Activated CD4-positive, alpha-beta memory T cell treated with anti-CD3 and anti-CD28 coated beads for 36 hours (primary cell): ENCODE measurements at regions of chr1 and their contacts with region 1.

Region 1: DNA sequence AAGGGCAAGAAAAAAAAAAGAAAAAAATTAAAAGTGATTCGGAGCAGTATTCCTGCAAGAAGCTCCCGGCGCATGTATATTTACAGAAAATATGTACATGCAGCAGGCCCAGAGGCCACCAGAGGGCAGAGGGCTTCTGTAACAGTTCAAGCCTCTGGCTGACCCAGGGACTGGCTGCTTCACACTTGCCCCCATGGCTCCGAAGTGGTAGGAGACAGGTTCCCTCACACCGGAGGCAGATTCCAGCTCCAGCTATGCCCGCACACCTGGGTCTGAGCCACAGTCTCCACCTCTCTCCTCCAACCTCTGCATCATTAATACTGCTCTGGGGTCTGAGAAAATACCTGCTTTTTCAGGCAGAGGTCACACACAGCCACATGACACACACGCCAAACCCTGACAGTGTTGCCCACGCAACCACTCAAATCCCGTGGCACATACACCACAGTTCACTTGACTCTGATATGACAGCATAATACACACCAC is 2.2 kb upstream of the ARHGAP30 start:
- DNase-seq: peak; percentile 64
- H3K4me3 Mint-ChIP-seq: no peak overlapping the region
- H3K27ac Mint-ChIP-seq: peak overlapping the region; percentile 39
- H3K4me1 Mint-ChIP-seq: peaks cover 31% of the 10 kb centered on the region
- H3K27me3 Mint-ChIP-seq: no peaks in the 10 kb centered on the region

Region 2: DNA sequence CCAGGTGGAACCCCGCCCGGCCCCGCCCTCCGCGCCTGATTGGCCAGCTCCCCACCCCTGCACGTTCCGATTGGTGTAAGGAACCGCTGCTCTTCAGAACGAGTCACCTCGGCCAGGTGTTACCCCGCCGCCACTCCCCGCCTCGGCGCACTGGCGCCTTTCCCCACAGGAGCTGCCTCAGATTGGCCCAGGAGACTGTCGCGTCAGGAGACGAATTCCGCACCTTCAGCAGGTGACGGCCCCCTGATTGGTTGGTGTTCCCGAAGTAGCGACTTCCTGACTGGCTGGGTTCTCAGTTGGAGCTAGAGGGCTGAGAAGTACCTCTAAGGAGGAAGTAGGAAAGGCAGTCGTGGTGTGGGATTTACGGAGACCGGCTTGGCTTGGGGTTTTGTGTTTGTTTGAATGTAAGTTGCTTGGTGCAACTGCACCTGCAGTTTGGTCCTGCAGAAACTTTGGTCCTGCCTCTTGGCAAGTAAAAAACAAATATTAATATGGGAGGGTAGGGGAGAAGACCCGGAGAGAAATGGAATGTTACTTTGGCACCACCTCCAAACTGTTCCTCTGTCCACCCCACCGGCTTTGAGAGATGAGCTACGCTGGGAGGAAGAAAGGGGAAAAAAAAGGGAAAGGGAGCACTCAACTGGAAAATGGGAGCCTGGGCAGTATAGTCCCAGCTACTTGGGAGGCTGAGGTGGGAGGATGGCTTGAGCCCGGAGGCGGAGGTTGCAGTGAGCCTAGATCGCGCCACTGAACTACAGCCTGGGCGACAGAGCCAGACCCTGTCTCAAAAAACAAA is 50.6 kb before region 1 on chr1:
- CTCF ChIA-PET with region 1: no interaction called
- POLR2A ChIA-PET with region 1: interaction called, 4 read pairs
- intact Hi-C with region 1: loop called (anchors 2 kb)
- DNase-seq: peak; percentile 92
- H3K4me3 Mint-ChIP-seq: peak overlapping the region; percentile 86
- H3K27ac Mint-ChIP-seq: peak overlapping the region; percentile 82
- H3K4me1 Mint-ChIP-seq: peaks cover 51% of the 10 kb centered on the region
- H3K27me3 Mint-ChIP-seq: no peaks in the 10 kb centered on the region

Region 3: DNA sequence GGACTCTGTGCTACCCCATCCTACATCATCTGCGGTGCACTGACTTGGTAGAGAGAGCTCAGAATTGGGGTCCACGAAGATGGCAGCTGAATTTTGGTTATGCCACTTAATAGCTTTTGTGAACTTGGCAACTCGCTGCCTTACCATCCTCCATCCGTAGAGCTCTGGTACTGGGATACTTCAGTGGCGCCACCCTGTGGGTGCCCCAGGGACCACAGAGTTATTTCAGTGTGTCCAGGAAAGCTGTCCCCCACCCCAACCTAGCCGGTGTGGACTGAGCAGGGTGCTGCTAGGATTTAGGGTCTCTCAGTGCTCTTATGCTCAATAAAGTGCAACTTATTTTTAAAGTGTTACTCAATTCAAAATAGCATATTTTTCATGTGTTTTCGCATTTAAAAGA is 17.1 kb before region 1 on chr1:
- CTCF ChIA-PET with region 1: interaction called, 3 read pairs
- POLR2A ChIA-PET with region 1: interaction called, 10 read pairs
- intact Hi-C with region 1: no loop called
- DNase-seq: no peak
- H3K4me3 Mint-ChIP-seq: no peak overlapping the region
- H3K27ac Mint-ChIP-seq: no peak overlapping the region
- H3K4me1 Mint-ChIP-seq: peaks cover 13% of the 10 kb centered on the region
- H3K27me3 Mint-ChIP-seq: no peaks in the 10 kb centered on the region

Region 4: GRCh38 chr1:161092621-161093028 is 20.7 kb after region 1 on chr1:
- CTCF ChIA-PET with region 1: interaction called, 120 read pairs
- POLR2A ChIA-PET with region 1: interaction called, 15 read pairs
- intact Hi-C with region 1: loop called (anchors 1 kb)
- DNase-seq: peak; percentile 76
- H3K4me3 Mint-ChIP-seq: no peak overlapping the region
- H3K27ac Mint-ChIP-seq: peak overlapping the region; percentile 70
- H3K4me1 Mint-ChIP-seq: peaks cover 52% of the 10 kb centered on the region
- H3K27me3 Mint-ChIP-seq: no peaks in the 10 kb centered on the region

Region 5: GRCh38 chr1:161117759-161118581 is 46.0 kb after region 1 on chr1 and contains the starts of genes NIT1 and PFDN2:
- CTCF ChIA-PET with region 1: interaction called, 12 read pairs
- POLR2A ChIA-PET with region 1: interaction called, 18 read pairs
- intact Hi-C with region 1: loop called (anchors 1 kb)
- DNase-seq: peak; percentile 92
- H3K4me3 Mint-ChIP-seq: peak within 1 kb of the TSS; percentile 93
- H3K27ac Mint-ChIP-seq: peak within 1 kb of the TSS; percentile 84
- H3K4me1 Mint-ChIP-seq: peaks cover 66% of the 10 kb centered on the region
- H3K27me3 Mint-ChIP-seq: no peaks in the 10 kb centered on the region
- total RNA-seq, gene NIT1: 65.2 to 66.5 TPM
- total RNA-seq, gene PFDN2: 152 to 155 TPM

Region 6: GRCh38 chr1:161139765-161140164 is 67.8 kb after region 1 on chr1:
- CTCF ChIA-PET with region 1: interaction called, 22 read pairs
- POLR2A ChIA-PET with region 1: interaction called, 5 read pairs
- intact Hi-C with region 1: no loop called
- DNase-seq: peak; percentile 40
- H3K4me3 Mint-ChIP-seq: no peak overlapping the region
- H3K27ac Mint-ChIP-seq: no peak overlapping the region
- H3K4me1 Mint-ChIP-seq: peaks cover 3% of the 10 kb centered on the region
- H3K27me3 Mint-ChIP-seq: no peaks in the 10 kb centered on the region

Region 7: GRCh38 chr1:161486806-161487741 is 415.1 kb after region 1 on chr1:
- CTCF ChIA-PET with region 1: no interaction called
- POLR2A ChIA-PET with region 1: no interaction called
- intact Hi-C with region 1: no loop called
- DNase-seq: peak; percentile 26
- H3K4me3 Mint-ChIP-seq: no peak overlapping the region
- H3K27ac Mint-ChIP-seq: no peak overlapping the region
- H3K4me1 Mint-ChIP-seq: peaks cover 13% of the 10 kb centered on the region
- H3K27me3 Mint-ChIP-seq: peaks cover 25% of the 10 kb centered on the region